SK-N-SH (cell line): ENCODE measurements at regions of chr6 and their contacts with region 1.

Region 1: GRCh38 chr6:39302669-39303424 is 11.4 kb downstream of the KCNK17 start:
- DNase-seq: peak; percentile 92
- H3K4me3 ChIP-seq: peak overlapping the region; percentile 14 to 30; a peak in 1 of 4 replicates
- H3K27ac ChIP-seq: no peak overlapping the region
- H3K4me1 ChIP-seq: peaks cover 0 to 2% of the 10 kb centered on the region in 2 experiments; a peak in 1 of 4 replicates
- H3K27me3 ChIP-seq: no peaks in the 10 kb centered on the region
- CTCF ChIP-seq: peak; percentile 76
- EP300 ChIP-seq: no peak
- RAD21 ChIP-seq: peak; percentile 92

Region 2: DNA sequence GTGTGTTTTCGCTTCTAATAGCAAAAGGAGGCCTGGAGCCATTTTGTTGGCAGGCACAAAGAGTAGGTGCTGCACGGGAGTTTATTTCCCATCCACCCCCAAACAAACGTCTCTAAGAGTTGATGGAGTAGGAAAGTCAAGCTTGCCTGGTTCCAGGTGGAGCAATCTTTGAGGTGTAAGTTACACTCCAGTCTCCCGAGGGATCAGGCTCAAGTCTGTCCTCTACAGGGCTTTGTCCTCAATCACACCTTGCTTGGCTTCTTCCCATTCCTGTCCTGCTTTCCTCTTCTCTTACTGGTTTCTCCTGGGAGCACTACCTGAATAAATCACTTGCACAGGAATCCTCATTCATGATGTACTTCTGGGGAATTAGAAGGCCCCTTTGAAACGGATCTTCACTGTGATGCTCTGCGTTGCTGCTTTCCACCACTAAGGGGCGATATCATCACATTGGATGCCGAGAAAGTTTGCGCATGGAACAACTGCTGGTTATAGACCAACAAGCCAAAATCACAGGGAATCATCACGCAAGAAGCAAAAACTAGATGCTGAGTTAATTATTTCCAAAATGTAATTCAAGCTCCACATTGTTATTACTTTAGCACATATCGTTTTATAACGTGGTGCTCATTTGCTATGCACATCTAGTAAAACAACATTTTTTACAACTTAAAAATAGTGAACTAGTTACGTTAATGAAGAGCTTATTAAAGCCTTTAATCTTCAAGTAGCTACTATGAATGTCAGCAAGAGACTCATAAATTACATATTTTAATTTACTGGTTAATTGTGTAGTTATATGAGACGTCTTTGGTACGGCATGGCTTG is 430.9 kb before region 1 on chr6:
- CTCF ChIA-PET with region 1: interaction called, 25 read pairs
- POLR2A ChIA-PET with region 1: no interaction called
- DNase-seq: peak; percentile 56
- H3K4me3 ChIP-seq: no peak overlapping the region
- H3K27ac ChIP-seq: no peak overlapping the region
- H3K4me1 ChIP-seq: no peaks in the 10 kb centered on the region; a peak in 1 of 4 replicates
- H3K27me3 ChIP-seq: no peaks in the 10 kb centered on the region
- CTCF ChIP-seq: peak; percentile 95
- EP300 ChIP-seq: no peak
- RAD21 ChIP-seq: peak; percentile 92

Region 3: GRCh38 chr6:38997128-38997761 is 305.6 kb before region 1 on chr6:
- CTCF ChIA-PET with region 1: interaction called, 110 read pairs
- POLR2A ChIA-PET with region 1: no interaction called
- DNase-seq: peak; percentile 49
- H3K4me3 ChIP-seq: no peak overlapping the region
- H3K27ac ChIP-seq: no peak overlapping the region
- H3K4me1 ChIP-seq: no peaks in the 10 kb centered on the region
- H3K27me3 ChIP-seq: no peaks in the 10 kb centered on the region
- CTCF ChIP-seq: peak; percentile 61
- EP300 ChIP-seq: no peak
- RAD21 ChIP-seq: peak; percentile 91

Region 4: GRCh38 chr6:39157511-39157910 is 145.3 kb before region 1 on chr6:
- CTCF ChIA-PET with region 1: interaction called, 20 read pairs
- POLR2A ChIA-PET with region 1: no interaction called
- DNase-seq: peak; percentile 47
- H3K4me3 ChIP-seq: no peak overlapping the region
- H3K27ac ChIP-seq: no peak overlapping the region
- H3K4me1 ChIP-seq: peaks cover 0 to 5% of the 10 kb centered on the region in 2 experiments; a peak in 2 of 4 replicates
- H3K27me3 ChIP-seq: no peaks in the 10 kb centered on the region
- CTCF ChIP-seq: no peak
- EP300 ChIP-seq: no peak
- RAD21 ChIP-seq: peak; percentile 18; the same call in 1 of the 2 replicates

Region 5: GRCh38 chr6:39182604-39183003 is 120.2 kb before region 1 on chr6:
- CTCF ChIA-PET with region 1: interaction called, 16 read pairs
- POLR2A ChIA-PET with region 1: interaction called, 3 read pairs
- DNase-seq: no peak
- H3K4me3 ChIP-seq: no peak overlapping the region
- H3K27ac ChIP-seq: no peak overlapping the region
- H3K4me1 ChIP-seq: no peaks in the 10 kb centered on the region
- H3K27me3 ChIP-seq: no peaks in the 10 kb centered on the region
- CTCF ChIP-seq: no peak
- EP300 ChIP-seq: no peak
- RAD21 ChIP-seq: no peak

Region 6: DNA sequence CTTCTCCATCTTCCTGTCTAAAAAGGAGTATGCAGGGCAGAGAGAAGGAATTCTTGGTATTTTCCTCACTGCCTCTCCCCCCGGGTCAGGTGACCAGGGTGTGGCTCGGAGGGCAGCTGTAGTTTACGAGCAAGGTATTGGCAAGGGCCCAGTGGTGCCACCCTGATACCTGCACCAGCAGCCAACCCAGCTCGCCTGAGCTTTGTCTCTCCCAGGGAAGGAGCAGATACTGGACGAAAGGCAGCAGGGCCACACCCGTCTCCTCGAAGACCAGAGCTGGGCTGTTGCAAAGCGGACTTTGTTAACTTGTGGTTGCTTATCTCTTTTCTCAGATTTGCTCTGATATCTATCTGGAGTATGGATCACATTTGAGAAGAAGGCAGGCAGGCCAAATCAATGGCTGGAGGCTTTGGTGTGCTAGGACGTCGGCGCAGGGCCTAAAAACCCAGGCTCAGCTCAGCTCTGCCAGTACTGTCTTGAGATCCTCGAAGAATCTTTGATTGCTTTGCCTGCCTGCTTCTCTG is 98.9 kb before region 1 on chr6:
- CTCF ChIA-PET with region 1: interaction called, 10 read pairs
- POLR2A ChIA-PET with region 1: no interaction called
- DNase-seq: no peak
- H3K4me3 ChIP-seq: no peak overlapping the region
- H3K27ac ChIP-seq: no peak overlapping the region
- H3K4me1 ChIP-seq: no peaks in the 10 kb centered on the region; a peak in 1 of 4 replicates
- H3K27me3 ChIP-seq: no peaks in the 10 kb centered on the region
- CTCF ChIP-seq: no peak
- EP300 ChIP-seq: no peak
- RAD21 ChIP-seq: no peak

Region 7: DNA sequence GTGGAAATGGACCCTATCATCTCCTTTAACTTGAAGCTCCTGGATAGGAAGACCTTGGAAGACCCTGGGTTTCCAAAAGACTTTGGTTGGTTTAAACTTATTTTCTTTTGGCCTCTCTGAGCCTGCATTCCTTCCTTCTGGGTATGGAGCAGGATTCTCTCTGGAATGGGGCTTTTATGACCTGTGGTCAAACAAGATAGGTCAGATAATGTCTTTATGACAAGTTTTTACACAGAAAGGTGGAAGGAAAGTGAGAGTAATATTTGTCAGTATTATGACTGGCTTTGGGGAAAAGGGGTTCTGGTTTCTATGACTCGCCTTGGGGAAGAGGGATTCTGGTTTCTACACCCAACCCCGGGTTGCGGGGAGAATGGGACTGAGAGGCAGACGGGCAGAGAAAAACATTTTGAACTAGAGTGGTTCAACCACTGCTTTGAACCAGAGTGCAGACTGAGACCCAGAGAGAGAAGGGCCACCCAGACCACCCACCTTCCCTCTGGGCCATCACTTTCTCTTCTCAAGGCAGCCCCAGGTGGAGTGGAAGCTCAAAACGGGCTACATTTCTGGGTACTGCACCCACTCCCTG is 36.0 kb before region 1 on chr6:
- CTCF ChIA-PET with region 1: interaction called, 10 read pairs
- POLR2A ChIA-PET with region 1: no interaction called
- DNase-seq: no peak
- H3K4me3 ChIP-seq: no peak overlapping the region
- H3K27ac ChIP-seq: no peak overlapping the region
- H3K4me1 ChIP-seq: no peaks in the 10 kb centered on the region
- H3K27me3 ChIP-seq: no peaks in the 10 kb centered on the region
- CTCF ChIP-seq: no peak
- EP300 ChIP-seq: no peak
- RAD21 ChIP-seq: no peak